ENCODE measurements at regions of chr9 and their contacts with region 1.

Region 1: GRCh38 chr9:112361601-112362000 is 18.3 kb upstream of the HSDL2 start:
- DNase-seq: no peak
- ATAC-seq: no peak
- H3K4me3 Mint-ChIP-seq: no peak overlapping the region
- H3K27ac Mint-ChIP-seq: no peak overlapping the region
- H3K4me1 Mint-ChIP-seq: peaks cover 6% of the 10 kb centered on the region
- H3K27me3 Mint-ChIP-seq: peaks cover 18% of the 10 kb centered on the region

Region 2: GRCh38 chr9:112086627-112087026 is 275.0 kb before region 1 on chr9:
- CTCF ChIA-PET with region 1: interaction called, 34 read pairs
- POLR2A ChIA-PET with region 1: no interaction called
- DNase-seq: peak; percentile 4
- ATAC-seq: no peak
- H3K4me3 Mint-ChIP-seq: no peak overlapping the region
- H3K27ac Mint-ChIP-seq: no peak overlapping the region
- H3K4me1 Mint-ChIP-seq: peaks cover 6% of the 10 kb centered on the region
- H3K27me3 Mint-ChIP-seq: no peaks in the 10 kb centered on the region

Region 3: DNA sequence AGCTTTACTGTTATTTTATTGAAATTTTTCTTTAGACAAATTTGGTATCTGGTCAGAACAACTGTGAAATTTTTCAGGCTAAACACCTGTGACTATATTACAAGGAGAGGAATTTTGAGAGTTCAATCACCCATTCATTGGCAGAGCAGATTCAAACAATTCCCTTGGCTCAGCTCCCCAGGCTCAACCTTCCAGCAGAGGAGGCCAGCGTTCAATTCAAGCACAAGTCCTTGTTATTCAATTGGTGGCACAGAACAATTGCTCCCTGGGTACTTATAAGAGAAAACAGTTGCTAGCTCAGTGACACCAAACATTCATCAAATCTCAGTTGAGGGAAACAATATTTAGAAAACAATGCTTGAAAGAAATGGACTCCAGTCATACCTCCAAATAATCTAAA is 269.8 kb before region 1 on chr9:
- CTCF ChIA-PET with region 1: interaction called, 69 read pairs
- POLR2A ChIA-PET with region 1: no interaction called
- DNase-seq: peak; percentile 24
- ATAC-seq: no peak
- H3K4me3 Mint-ChIP-seq: no peak overlapping the region
- H3K27ac Mint-ChIP-seq: no peak overlapping the region
- H3K4me1 Mint-ChIP-seq: peaks cover 27% of the 10 kb centered on the region
- H3K27me3 Mint-ChIP-seq: no peaks in the 10 kb centered on the region

Measured in activated CD8-positive, alpha-beta T cell treated with anti-CD3 and anti-CD28 coated beads, Interleukin-2, amount 10 ng/mL, durations not matched to agents 7 days and 5 days (primary cell).